ENCODE measurements at regions of chr18 and their contacts with region 1.

Region 1: DNA sequence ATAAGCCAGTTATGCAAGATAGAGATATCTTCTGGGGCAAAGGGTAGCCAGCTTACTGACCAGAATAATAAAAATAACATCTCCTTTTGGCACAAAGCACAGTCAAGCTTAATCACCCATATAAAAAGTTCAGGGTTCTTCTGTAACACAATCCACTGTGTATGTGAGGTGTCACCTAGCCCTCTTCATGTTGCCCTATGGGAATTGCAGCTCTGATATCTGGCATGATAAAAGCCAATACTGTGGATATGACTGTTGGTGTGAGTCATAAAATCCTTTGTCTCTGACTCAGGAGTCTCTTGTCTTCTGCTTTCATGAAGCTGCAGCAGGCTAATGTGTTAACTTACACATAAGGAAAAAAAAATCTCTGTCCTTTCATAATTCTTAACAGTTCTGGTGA is 90.8 kb downstream of the DSEL start:
- DNase-seq: peak; percentile 22 to 88
- H3K4me3 ChIP-seq: no peak overlapping the region
- H3K27ac ChIP-seq: no peak overlapping the region
- H3K4me1 ChIP-seq: peaks cover 6% of the 10 kb centered on the region; the same call in 1 of the 2 replicates
- H3K27me3 ChIP-seq: no peaks in the 10 kb centered on the region
- CTCF ChIP-seq: no peak

Region 2: GRCh38 chr18:67192535-67192934 is 233.2 kb before region 1 on chr18:
- CTCF ChIA-PET with region 1: no interaction called
- POLR2A ChIA-PET with region 1: no interaction called
- intact Hi-C with region 1: no loop called
- DNase-seq: no peak
- H3K4me3 ChIP-seq: no peak overlapping the region
- H3K27ac ChIP-seq: no peak overlapping the region
- H3K4me1 ChIP-seq: no peaks in the 10 kb centered on the region
- H3K27me3 ChIP-seq: no peaks in the 10 kb centered on the region
- CTCF ChIP-seq: no peak

Region 3: GRCh38 chr18:67359873-67360838 is 65.6 kb before region 1 on chr18:
- CTCF ChIA-PET with region 1: no interaction called
- POLR2A ChIA-PET with region 1: no interaction called
- intact Hi-C with region 1: loop called (anchors 2 kb)
- DNase-seq: peak; percentile 42 to 84
- H3K4me3 ChIP-seq: peak overlapping the region; percentile 41; the same call in 1 of the 2 replicates
- H3K27ac ChIP-seq: peak overlapping the region; percentile 63
- H3K4me1 ChIP-seq: peaks cover 14% of the 10 kb centered on the region
- H3K27me3 ChIP-seq: no peaks in the 10 kb centered on the region
- CTCF ChIP-seq: no peak

Measured in PC-9 (cell line).